ENCODE measurements at regions of chrX and their contacts with region 1.

Region 1: GRCh38 chrX:21839334-21840192 is at the start of gene MBTPS2:
- DNase-seq: peak; percentile 87 to 94
- H3K4me3 ChIP-seq: peak within 1 kb of the TSS; percentile 91
- H3K4me1 ChIP-seq: peaks cover 15% of the 10 kb centered on the region
- H3K27me3 ChIP-seq: no peaks in the 10 kb centered on the region

Region 2: GRCh38 chrX:21745756-21746155 is 93.8 kb before region 1 on chrX:
- in situ Hi-C with region 1: no loop called
- DNase-seq: peak; percentile 31 to 74
- H3K4me3 ChIP-seq: no peak overlapping the region
- H3K4me1 ChIP-seq: peaks cover 14% of the 10 kb centered on the region
- H3K27me3 ChIP-seq: peaks cover 10% of the 10 kb centered on the region; the same call in 1 of the 2 replicates

Region 3: GRCh38 chrX:21940356-21940829 is 100.8 kb after region 1 on chrX and contains the start of gene SMS:
- in situ Hi-C with region 1: loop called (anchors 10 kb)
- DNase-seq: peak; percentile 77 to 88
- H3K4me3 ChIP-seq: peak within 1 kb of the TSS; percentile 68
- H3K4me1 ChIP-seq: peaks cover 23% of the 10 kb centered on the region
- H3K27me3 ChIP-seq: no peaks in the 10 kb centered on the region

Region 4: GRCh38 chrX:21972721-21973120 is 133.2 kb after region 1 on chrX:
- in situ Hi-C with region 1: loop called (anchors 5 kb)
- DNase-seq: no peak
- H3K4me3 ChIP-seq: no peak overlapping the region
- H3K4me1 ChIP-seq: no peaks in the 10 kb centered on the region
- H3K27me3 ChIP-seq: no peaks in the 10 kb centered on the region